Adrenal gland (tissue), 19 donors: ENCODE measurements at regions of chrX and their contacts with region 1.

Region 1: GRCh38 chrX:107776649-107777535 is 641 bp upstream of the NCBP2L start:
- DNase-seq: peak; percentile 82 to 96 (median 90)
- H3K4me3 ChIP-seq: peak overlapping the region in 1 of 4 donors; percentile 69
- H3K27ac ChIP-seq: peak overlapping the region in 4 of 5 donors; percentile 72 to 89 (median 80)
- H3K4me1 ChIP-seq: no peaks in the 10 kb centered on the region
- H3K27me3 ChIP-seq: peaks cover 16% of the 10 kb centered on the region
- CTCF ChIP-seq: peak; percentile 47 to 90 (median 84)
- POLR2A ChIP-seq: peak in 1 of 2 donors; percentile 47

Region 2: GRCh38 chrX:107610667-107611066 is 166.2 kb before region 1 on chrX:
- intact Hi-C with region 1: no loop called
- DNase-seq: no peak
- H3K4me3 ChIP-seq: no peak overlapping the region
- H3K27ac ChIP-seq: no peak overlapping the region
- H3K4me1 ChIP-seq: no peaks in the 10 kb centered on the region
- H3K27me3 ChIP-seq: peaks cover 5% of the 10 kb centered on the region
- CTCF ChIP-seq: no peak
- POLR2A ChIP-seq: no peak

Region 3: GRCh38 chrX:107627838-107628661 is 148.8 kb before region 1 on chrX and contains the start of gene PRPS1:
- intact Hi-C with region 1: no loop called
- DNase-seq: peak; percentile 86 to 97 (median 94)
- H3K4me3 ChIP-seq: peak within 1 kb of the TSS in 3 of 4 donors; percentile 61 to 78 (median 63)
- H3K27ac ChIP-seq: peak within 1 kb of the TSS in 4 of 5 donors; percentile 74 to 90 (median 83)
- H3K4me1 ChIP-seq: peaks cover 0 to 6% of the 10 kb centered on the region in 2 donors
- H3K27me3 ChIP-seq: no peaks in the 10 kb centered on the region
- CTCF ChIP-seq: no peak
- POLR2A ChIP-seq: peak; percentile 44 to 79
- total RNA-seq, gene PRPS1: 9.9 to 55.1 (median 36.4) TPM

Region 4: GRCh38 chrX:107654872-107655761 is 121.8 kb before region 1 on chrX:
- intact Hi-C with region 1: loop called in 1 of 2 experiments (anchors 10 kb)
- DNase-seq: peak in 5 of 7 donors; percentile 28 to 53 (median 35)
- H3K4me3 ChIP-seq: no peak overlapping the region
- H3K27ac ChIP-seq: peak overlapping the region in 2 of 5 donors; percentile 8 to 53
- H3K4me1 ChIP-seq: no peaks in the 10 kb centered on the region
- H3K27me3 ChIP-seq: peaks cover 4% of the 10 kb centered on the region
- CTCF ChIP-seq: peak in 5 of 6 experiments; percentile 23 to 62 (median 55)
- POLR2A ChIP-seq: no peak

Region 5: DNA sequence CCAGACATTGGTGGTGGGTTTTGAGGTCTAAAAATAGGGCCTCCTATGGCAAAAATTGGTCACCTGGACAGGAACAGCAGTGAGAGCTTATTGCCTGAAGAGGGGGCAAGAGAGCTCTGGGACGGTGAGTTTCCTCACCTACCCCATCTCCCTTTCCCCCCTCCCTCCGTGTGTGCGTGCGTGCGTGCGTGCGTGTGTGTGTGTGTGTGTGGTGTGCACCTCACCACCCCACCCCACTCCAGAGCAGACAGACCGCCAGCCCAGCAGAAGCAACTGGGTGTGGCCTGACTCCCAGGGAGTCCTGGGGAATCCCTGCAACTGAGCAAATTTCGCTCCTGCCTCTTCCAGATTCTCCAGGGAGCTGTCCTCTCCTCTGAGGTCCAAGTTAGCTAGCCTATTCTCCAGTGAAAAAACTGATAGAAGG is 103.9 kb before region 1 on chrX:
- intact Hi-C with region 1: loop called (anchors 10 kb)
- DNase-seq: peak; percentile 68 to 89 (median 81)
- H3K4me3 ChIP-seq: no peak overlapping the region
- H3K27ac ChIP-seq: peak overlapping the region in 4 of 5 donors; percentile 32 to 86 (median 73)
- H3K4me1 ChIP-seq: peaks cover 0 to 29% of the 10 kb centered on the region in 2 donors
- H3K27me3 ChIP-seq: no peaks in the 10 kb centered on the region
- CTCF ChIP-seq: peak; percentile 25 to 78 (median 72)
- POLR2A ChIP-seq: peak in 1 of 2 donors; percentile 34

Region 6: DNA sequence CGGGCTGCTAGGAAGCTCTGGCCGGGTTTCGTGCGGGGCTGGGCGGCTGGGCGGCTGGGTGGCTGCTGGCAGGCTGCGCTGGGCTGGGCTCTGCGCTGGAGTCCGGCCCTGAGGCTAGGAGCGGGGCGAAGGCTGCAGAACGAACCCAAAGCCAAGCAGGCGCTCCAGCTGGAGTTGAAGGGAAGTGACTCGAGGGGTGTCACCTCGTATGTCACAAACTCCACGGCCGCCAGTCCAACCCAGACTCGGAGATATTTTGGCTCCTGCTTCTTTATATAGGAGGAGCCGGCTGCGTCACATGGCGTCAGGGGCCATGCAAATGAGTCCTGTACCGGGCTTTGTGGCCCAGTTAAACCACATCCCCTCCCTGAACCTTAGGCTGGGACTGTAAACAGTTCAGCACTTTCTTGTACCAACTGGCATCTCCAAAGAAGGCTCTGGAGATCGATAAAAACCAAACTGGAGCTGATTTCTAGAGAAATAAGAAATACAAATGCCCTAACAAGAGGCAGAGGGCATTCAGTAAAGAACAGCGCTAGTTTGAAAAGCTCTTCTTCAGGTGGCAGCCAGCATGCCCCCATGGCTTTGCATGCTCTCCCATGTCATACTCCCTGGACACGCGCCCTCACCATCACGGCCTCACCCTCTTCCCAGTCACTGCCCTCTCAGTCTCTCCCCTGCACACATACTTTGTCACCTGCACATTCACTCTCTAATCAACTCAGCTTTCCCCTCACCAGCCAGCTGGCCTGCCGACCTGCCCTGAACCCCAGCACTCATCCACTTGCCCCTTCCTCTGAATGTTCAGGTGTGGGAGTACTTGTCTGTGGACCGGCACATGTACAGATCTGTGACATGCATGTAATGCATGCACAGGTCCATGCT is 59.8 kb before region 1 on chrX:
- intact Hi-C with region 1: loop called (anchors 5 to 10 kb)
- DNase-seq: peak; percentile 86 to 97 (median 92)
- H3K4me3 ChIP-seq: peak overlapping the region in 3 of 4 donors; percentile 40 to 83 (median 79)
- H3K27ac ChIP-seq: peak overlapping the region; percentile 72 to 98 (median 95)
- H3K4me1 ChIP-seq: peaks cover 22 to 49% of the 10 kb centered on the region in 2 donors
- H3K27me3 ChIP-seq: peaks cover 12% of the 10 kb centered on the region
- CTCF ChIP-seq: peak in 2 of 6 experiments; percentile 9 to 20
- POLR2A ChIP-seq: peak; percentile 98 to 99